Heart right ventricle (tissue), 16 donors: ENCODE measurements at regions of chr3 and their contacts with region 1.

Region 1: DNA sequence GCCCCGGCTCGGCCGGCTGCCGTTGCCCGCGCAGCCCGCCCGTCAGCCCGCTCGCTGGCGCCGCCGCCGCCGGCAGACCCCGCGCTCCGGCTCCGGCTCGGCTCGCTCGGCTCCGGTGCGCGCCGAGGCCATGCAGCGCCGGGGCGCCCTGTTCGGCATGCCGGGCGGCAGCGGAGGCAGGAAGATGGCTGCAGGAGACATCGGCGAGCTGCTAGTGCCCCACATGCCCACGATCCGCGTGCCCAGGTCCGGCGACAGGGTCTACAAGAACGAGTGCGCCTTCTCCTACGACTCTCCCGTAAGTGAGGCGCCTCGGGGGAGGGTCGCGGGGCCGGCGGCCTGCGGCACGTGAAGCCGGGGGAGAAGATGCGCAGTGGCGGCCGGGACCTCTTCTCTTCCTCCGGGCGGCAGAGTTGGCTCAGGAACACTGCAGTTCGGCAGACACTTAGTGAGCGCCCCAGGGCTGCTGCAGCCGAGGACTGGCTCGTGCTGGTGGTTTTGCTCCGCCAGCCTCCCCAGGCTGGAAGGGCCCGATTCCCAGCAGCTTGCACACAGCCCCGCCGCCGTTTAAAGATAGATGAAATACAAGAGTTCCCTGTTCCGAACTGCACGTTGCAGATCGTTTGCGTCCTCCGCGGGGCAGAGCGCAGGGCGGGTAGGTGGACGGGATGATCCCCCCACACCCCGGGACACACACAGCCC is 407 bp downstream of the USP13 start:
- DNase-seq: peak; percentile 76 to 78
- ATAC-seq: peak; percentile 83 to 89 (median 86)
- H3K4me3 ChIP-seq: peak overlapping the region; percentile 52 to 90 (median 88)
- H3K27ac ChIP-seq: peak overlapping the region; percentile 80 to 97 (median 94)
- H3K4me1 ChIP-seq: peaks cover 0 to 51% (median 8%) of the 10 kb centered on the region in 9 donors
- H3K27me3 ChIP-seq: no peaks in the 10 kb centered on the region
- CTCF ChIP-seq: peak in 5 of 9 donors; percentile 8 to 45 (median 37)

Region 2: DNA sequence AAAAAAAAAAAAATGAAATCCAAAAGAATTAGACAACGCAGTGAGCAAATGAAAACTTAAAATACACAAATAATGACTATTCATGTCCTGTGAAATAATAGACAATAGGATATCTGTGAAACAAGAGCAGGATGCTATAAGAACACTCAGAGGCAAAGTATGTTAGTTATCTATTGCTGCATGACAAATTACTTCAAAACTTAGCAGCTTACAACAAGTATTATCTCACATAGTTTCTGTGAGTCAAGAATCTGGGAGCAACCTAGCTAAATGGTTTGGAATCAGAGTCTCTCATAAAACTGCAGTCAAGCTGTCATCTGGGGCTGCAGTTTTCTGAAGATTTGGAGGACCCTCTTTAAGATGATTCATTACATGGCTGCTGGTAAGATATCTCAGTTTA is 545.2 kb before region 1 on chr3:
- intact Hi-C with region 1: no loop called
- DNase-seq: no peak
- ATAC-seq: no peak
- H3K4me3 ChIP-seq: no peak overlapping the region
- H3K27ac ChIP-seq: no peak overlapping the region
- H3K4me1 ChIP-seq: no peaks in the 10 kb centered on the region
- H3K27me3 ChIP-seq: peaks cover 0 to 4% (median 0%) of the 10 kb centered on the region in 7 donors
- CTCF ChIP-seq: no peak

Region 3: GRCh38 chr3:179482857-179483256 is 170.4 kb before region 1 on chr3:
- intact Hi-C with region 1: no loop called
- DNase-seq: no peak
- ATAC-seq: no peak
- H3K4me3 ChIP-seq: no peak overlapping the region
- H3K27ac ChIP-seq: no peak overlapping the region
- H3K4me1 ChIP-seq: peaks cover 0 to 6% (median 0%) of the 10 kb centered on the region in 9 donors
- H3K27me3 ChIP-seq: no peaks in the 10 kb centered on the region
- CTCF ChIP-seq: no peak

Region 4: GRCh38 chr3:179688850-179689249 is 35.6 kb after region 1 on chr3:
- intact Hi-C with region 1: no loop called
- DNase-seq: no peak
- ATAC-seq: no peak
- H3K4me3 ChIP-seq: no peak overlapping the region
- H3K27ac ChIP-seq: no peak overlapping the region
- H3K4me1 ChIP-seq: no peaks in the 10 kb centered on the region
- H3K27me3 ChIP-seq: no peaks in the 10 kb centered on the region
- CTCF ChIP-seq: no peak

Region 5: DNA sequence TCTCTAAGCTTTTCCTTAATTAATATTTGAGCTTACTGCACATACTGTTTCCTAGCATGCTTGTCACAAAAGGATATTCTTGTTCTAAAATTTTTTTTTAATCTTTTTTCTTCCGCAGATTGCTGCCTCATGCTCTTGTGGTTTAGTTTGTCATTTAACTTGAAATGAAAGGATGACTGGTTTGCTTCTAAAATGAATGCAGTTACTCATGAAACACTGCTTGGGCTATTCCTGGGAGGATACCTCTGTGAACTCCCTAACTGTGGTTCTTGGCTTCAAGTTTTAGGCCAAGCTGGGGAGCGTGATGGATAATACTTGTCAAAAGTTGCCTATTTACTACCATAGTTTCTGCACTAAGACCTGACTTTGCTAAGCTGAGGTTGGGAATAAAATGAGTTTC is 63.6 kb after region 1 on chr3:
- intact Hi-C with region 1: loop called in 1 of 10 experiments (anchors 10 kb)
- DNase-seq: no peak
- ATAC-seq: peak in 1 of 8 donors; percentile 44
- H3K4me3 ChIP-seq: no peak overlapping the region
- H3K27ac ChIP-seq: peak overlapping the region in 7 of 10 donors; percentile 1 to 89 (median 30)
- H3K4me1 ChIP-seq: peaks cover 0 to 29% (median 9%) of the 10 kb centered on the region in 9 donors
- H3K27me3 ChIP-seq: no peaks in the 10 kb centered on the region
- CTCF ChIP-seq: no peak

Region 6: DNA sequence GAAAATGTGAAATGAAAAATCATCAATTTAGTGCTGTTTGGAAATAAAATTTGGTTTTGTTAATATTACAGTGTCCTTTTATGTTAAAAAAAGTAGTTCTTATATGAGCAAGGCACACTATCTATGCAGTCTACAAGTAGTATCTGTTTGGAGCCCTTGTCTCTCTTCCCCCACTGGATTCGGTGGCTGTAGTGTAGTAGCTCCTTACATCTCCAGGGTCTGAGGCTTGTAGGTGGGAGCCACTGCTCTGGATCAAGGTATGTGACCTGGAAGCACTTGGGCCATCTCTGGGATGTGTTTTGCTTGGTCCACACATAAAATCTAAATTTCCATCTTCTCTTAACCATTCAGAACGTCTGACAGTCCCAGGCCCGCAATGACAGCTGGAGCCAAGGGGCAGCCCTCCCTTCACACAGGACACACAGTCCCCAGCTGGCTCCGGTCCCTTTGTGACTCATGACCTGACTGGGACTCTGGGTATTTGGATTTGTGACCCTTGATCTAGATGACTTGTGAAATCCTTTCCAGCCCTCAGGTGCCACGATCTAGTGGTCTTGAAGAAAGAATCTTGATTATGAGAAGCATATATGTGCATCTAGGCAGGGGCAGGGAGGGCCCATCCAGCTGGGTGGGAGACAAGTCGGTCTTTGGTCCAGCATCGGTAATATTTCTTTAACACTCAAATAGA is 79.6 kb after region 1 on chr3:
- intact Hi-C with region 1: loop called in 3 of 10 experiments (anchors 2 to 5 kb)
- DNase-seq: peak; percentile 62 to 67
- ATAC-seq: peak; percentile 66 to 93 (median 89)
- H3K4me3 ChIP-seq: no peak overlapping the region
- H3K27ac ChIP-seq: peak overlapping the region; percentile 62 to 81 (median 78)
- H3K4me1 ChIP-seq: peaks cover 0 to 56% (median 20%) of the 10 kb centered on the region in 9 donors
- H3K27me3 ChIP-seq: no peaks in the 10 kb centered on the region
- CTCF ChIP-seq: no peak

Region 7: DNA sequence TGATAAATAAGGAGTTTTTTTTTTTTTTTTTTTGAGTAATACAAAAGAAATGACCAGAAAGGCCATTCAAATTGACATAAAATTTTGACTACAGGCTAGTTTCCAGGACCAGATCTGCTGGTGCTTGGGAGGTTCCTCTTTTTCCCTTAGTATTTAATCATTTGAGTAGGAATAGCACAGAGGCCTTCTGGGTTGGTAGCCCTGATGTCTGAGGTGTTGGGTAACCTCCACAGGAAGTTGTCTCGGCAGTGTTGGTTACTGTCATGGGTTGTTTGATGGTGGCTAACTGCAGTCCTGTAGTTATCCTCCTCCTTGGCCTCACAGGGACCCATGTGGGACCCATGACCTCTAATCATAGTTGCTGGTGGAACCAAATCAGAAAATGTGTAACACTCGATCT is 90.7 kb after region 1 on chr3:
- intact Hi-C with region 1: loop called in 3 of 10 experiments (anchors 5 to 10 kb)
- DNase-seq: no peak
- ATAC-seq: peak in 6 of 8 donors; percentile 31 to 51 (median 36)
- H3K4me3 ChIP-seq: no peak overlapping the region
- H3K27ac ChIP-seq: peak overlapping the region in 3 of 10 donors; percentile 1 to 21 (median 3)
- H3K4me1 ChIP-seq: peaks cover 0 to 20% (median 6%) of the 10 kb centered on the region in 9 donors
- H3K27me3 ChIP-seq: no peaks in the 10 kb centered on the region
- CTCF ChIP-seq: no peak

Region 8: GRCh38 chr3:179768080-179768479 is 114.8 kb after region 1 on chr3:
- intact Hi-C with region 1: loop called in 1 of 10 experiments (anchors 5 kb)
- DNase-seq: no peak
- ATAC-seq: no peak
- H3K4me3 ChIP-seq: no peak overlapping the region
- H3K27ac ChIP-seq: no peak overlapping the region
- H3K4me1 ChIP-seq: peaks cover 0 to 11% (median 0%) of the 10 kb centered on the region in 9 donors
- H3K27me3 ChIP-seq: no peaks in the 10 kb centered on the region
- CTCF ChIP-seq: peak in 7 of 9 donors; percentile 12 to 42 (median 26)